MCF 10A (cell line): ENCODE measurements at regions of chr5 and their contacts with region 1.

Region 1: GRCh38 chr5:17132444-17133083 is 84.9 kb upstream of the BASP1 start:
- DNase-seq: peak; percentile 49
- H3K4me3 Mint-ChIP-seq: no peak overlapping the region
- H3K27ac Mint-ChIP-seq: no peak overlapping the region
- H3K4me1 Mint-ChIP-seq: peaks cover 7% of the 10 kb centered on the region
- H3K27me3 Mint-ChIP-seq: no peaks in the 10 kb centered on the region
- CTCF ChIP-seq: peak; percentile 36

Region 2: DNA sequence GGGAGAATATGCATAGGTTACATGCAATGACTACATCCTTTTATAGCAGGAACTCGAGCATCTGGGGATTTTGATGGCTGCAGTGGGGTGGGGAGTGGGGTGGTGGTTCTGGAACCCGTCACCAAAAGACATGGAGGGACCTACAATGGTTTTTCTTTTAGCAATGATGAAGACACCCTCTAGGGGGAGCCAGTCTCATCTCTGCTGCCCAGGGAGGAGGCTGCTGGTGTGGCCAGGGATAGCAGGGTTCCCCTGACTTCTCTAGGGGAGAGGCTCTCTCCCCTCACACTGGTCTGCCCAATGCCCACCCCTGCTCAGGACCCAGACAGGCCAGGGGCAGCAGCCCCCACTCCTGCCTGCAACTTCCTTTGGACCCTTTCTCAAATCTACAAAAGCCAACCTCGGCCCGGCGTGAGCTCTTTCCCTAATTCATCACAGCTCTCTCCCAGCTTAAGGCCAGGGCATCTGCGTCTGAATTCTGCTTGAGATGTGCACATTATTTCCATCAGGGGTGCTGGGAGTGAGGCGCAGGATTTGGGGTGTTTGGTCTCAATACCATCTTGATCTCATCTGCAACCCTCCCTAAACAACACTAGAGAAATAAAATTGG is 442.2 kb before region 1 on chr5:
- CTCF ChIA-PET with region 1: interaction called, 3 read pairs
- POLR2A ChIA-PET with region 1: no interaction called
- intact Hi-C with region 1: loop called (anchors 5 kb)
- DNase-seq: peak; percentile 59
- H3K4me3 Mint-ChIP-seq: no peak overlapping the region
- H3K27ac Mint-ChIP-seq: no peak overlapping the region
- H3K4me1 Mint-ChIP-seq: no peaks in the 10 kb centered on the region
- H3K27me3 Mint-ChIP-seq: no peaks in the 10 kb centered on the region
- CTCF ChIP-seq: peak; percentile 48

Region 3: DNA sequence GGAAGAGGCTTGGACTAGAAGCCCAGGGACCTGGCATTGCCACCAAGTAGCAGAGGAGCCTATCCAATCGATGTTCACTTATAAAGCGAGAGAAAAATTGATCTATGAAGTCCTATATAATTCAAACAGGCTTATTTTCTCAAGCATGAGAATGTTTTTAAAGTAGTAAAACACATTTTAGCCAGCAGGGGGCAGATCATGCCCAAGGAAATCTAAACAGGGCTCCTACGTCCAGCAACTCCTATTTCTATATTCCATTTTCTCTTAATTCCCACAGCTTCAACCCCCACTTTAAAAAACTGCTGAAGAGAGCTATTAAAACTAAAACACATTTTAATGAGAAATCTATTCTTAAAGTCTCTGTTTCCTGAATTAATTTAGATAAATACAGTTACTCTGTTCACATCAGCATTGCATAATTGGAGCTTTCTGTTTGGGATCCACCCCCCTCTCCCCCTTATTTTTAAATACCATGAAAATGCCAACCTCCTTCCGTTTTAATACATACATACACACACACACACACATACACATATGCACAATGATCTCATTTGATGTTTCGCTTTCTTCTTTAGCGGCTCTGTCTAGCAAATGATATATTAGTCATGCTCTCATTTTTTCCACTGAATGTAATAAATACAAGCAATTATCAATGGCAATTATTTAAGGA is 341.4 kb before region 1 on chr5:
- CTCF ChIA-PET with region 1: interaction called, 50 read pairs
- POLR2A ChIA-PET with region 1: interaction called, 7 read pairs
- intact Hi-C with region 1: loop called (anchors 1 kb)
- DNase-seq: peak; percentile 63
- H3K4me3 Mint-ChIP-seq: no peak overlapping the region
- H3K27ac Mint-ChIP-seq: no peak overlapping the region
- H3K4me1 Mint-ChIP-seq: peaks cover 31% of the 10 kb centered on the region
- H3K27me3 Mint-ChIP-seq: no peaks in the 10 kb centered on the region
- CTCF ChIP-seq: peak; percentile 52

Region 4: GRCh38 chr5:16916262-16916865 is 216.2 kb before region 1 on chr5:
- CTCF ChIA-PET with region 1: interaction called, 15 read pairs
- POLR2A ChIA-PET with region 1: interaction called, 3 read pairs
- intact Hi-C with region 1: no loop called
- DNase-seq: peak; percentile 93
- H3K4me3 Mint-ChIP-seq: peak overlapping the region; percentile 54
- H3K27ac Mint-ChIP-seq: peak overlapping the region; percentile 81
- H3K4me1 Mint-ChIP-seq: peaks cover 43% of the 10 kb centered on the region
- H3K27me3 Mint-ChIP-seq: no peaks in the 10 kb centered on the region
- CTCF ChIP-seq: no peak

Region 5: GRCh38 chr5:17113163-17113958 is 19.2 kb before region 1 on chr5:
- CTCF ChIA-PET with region 1: interaction called, 22 read pairs
- POLR2A ChIA-PET with region 1: no interaction called
- intact Hi-C with region 1: no loop called
- DNase-seq: no peak
- H3K4me3 Mint-ChIP-seq: no peak overlapping the region
- H3K27ac Mint-ChIP-seq: no peak overlapping the region
- H3K4me1 Mint-ChIP-seq: peaks cover under 1% of the 10 kb centered on the region
- H3K27me3 Mint-ChIP-seq: no peaks in the 10 kb centered on the region
- CTCF ChIP-seq: no peak

Region 6: DNA sequence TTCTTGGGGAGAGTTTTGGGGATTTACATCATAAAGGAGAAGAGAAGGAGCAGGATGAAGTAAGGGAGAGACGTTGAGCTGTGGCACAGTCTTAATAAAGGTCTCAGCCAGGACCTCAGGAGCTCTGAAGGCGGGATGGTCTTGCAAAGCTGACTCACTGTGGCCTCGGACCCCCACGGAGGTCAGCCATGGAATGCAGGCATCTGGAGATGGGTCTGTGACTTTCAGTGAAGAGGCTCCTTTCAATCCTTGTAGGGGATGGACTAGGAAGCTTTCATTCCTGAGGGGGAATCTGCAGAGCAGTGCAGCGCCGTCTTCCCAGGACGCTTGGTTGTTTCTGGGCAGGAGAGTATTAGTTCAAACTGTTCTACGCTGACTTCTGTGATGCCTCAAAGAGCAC is 19.1 kb after region 1 on chr5:
- CTCF ChIA-PET with region 1: interaction called, 22 read pairs
- POLR2A ChIA-PET with region 1: interaction called, 3 read pairs
- intact Hi-C with region 1: no loop called
- DNase-seq: no peak
- H3K4me3 Mint-ChIP-seq: no peak overlapping the region
- H3K27ac Mint-ChIP-seq: no peak overlapping the region
- H3K4me1 Mint-ChIP-seq: peaks cover 17% of the 10 kb centered on the region
- H3K27me3 Mint-ChIP-seq: no peaks in the 10 kb centered on the region
- CTCF ChIP-seq: no peak